GM10248 (cell line): ENCODE measurements at regions of chr22 and their contacts with region 1.

Region 1: DNA sequence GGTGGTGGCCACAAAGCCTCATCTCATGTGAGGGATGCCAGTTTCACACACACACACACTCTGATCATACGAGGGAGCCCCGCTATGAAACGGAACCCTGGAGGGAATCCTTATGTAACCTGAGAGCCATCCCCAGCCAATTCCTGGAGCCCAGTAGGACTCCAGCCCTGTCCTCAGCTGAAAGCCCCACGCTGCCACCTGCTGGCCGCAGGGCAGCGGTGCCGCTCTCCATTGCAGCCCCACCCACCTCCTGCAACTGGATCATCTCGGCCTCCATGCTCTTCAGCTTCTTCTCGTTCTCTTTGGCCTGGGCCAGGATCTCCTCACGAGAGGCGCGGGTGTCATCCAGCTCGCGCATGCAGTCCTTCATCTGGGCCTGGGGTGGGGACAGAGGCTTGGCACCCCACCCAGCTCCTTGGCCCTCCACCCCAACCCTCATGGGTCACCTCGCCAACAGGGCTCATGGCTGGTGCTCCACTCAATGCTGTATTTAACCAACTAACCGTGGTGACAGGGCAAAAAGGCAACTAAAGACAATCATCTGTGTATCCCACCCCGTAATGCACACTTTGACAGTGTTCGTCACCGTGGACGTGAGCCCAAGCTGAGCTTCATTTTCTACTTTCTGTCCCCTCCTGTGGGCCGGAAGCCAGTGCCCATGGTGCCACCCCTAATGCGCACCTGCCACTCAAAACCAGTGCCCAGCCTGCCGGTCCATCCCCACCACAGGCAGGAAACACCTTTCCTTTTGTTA is 33.7 kb downstream of the APOL1 start:
- DNase-seq: peak; percentile 82
- CTCF ChIP-seq: peak; percentile 92

Region 2: GRCh38 chr22:36194971-36195370 is 91.7 kb before region 1 on chr22:
- CTCF ChIA-PET with region 1: interaction called, 18 read pairs
- POLR2A ChIA-PET with region 1: no interaction called
- DNase-seq: peak; percentile 45
- CTCF ChIP-seq: peak; percentile 66

Region 3: GRCh38 chr22:36227386-36227785 is 59.3 kb before region 1 on chr22:
- CTCF ChIA-PET with region 1: no interaction called
- POLR2A ChIA-PET with region 1: no interaction called
- DNase-seq: no peak
- CTCF ChIP-seq: no peak

Region 4: DNA sequence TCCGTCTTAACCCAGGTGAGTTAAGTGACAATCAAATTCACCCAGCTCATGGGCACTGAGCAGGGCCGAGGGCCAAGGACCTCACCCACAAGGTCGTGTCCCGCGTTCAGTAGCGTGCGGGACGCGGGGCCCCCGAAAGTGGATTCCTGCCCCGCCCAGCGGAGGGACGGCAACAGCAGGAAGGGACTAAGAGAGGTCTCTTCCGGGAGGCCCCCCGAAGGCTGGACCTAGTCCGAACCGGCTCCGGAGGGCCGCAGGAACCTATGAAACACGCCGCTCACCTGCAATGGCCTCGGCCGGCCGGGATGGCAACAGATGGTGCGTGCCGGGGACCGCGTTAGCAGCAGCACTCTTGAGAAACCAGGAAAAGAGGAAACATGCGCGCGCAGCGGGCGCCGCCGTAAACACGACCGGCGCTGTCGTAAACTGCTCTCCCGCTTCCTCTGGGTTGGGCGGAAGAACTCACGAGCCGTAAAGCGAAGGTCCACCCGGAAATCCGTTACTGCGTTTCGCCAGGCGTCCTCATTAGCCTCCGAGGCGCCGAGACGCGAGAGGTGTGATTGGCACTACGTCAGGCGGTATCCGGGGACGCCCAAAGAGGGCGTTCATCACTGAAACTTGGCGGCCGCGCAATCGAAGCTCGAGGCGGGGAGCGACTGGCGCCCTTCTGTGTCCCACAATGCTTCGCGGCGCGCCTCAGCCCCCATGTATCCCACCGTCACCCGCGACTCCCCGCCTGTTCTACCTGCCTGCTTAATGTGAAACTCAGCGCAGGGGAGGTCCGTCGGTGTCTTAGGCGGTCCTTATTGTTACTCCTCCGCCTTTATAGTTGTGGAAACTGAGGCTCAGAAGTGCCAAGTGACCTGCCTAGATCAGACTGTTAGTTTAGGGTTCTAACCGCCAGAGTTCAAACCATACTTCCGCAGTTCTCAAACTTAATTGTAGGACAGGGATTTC is 242.4 kb after region 1 on chr22 and contains the start of gene EIF3D:
- CTCF ChIA-PET with region 1: no interaction called
- POLR2A ChIA-PET with region 1: no interaction called
- DNase-seq: peak; percentile 94
- CTCF ChIP-seq: peak; percentile 1